ENCODE measurements at regions of chr12 and their contacts with region 1.

Region 1: GRCh38 chr12:21248679-21249078 is 86.0 kb downstream of the SLCO1A2 start:
- DNase-seq: no peak
- H3K4me3 ChIP-seq: no peak overlapping the region
- H3K27ac ChIP-seq: no peak overlapping the region
- H3K4me1 ChIP-seq: no peaks in the 10 kb centered on the region
- H3K27me3 ChIP-seq: no peaks in the 10 kb centered on the region
- CTCF ChIP-seq: peak; percentile 57; the same call in 1 of the 2 replicates

Region 2: GRCh38 chr12:20547816-20548575 is 700.7 kb before region 1 on chr12:
- CTCF ChIA-PET with region 1: interaction called, 11 read pairs
- POLR2A ChIA-PET with region 1: no interaction called
- intact Hi-C with region 1: no loop called
- DNase-seq: no peak
- H3K4me3 ChIP-seq: no peak overlapping the region
- H3K27ac ChIP-seq: no peak overlapping the region
- H3K4me1 ChIP-seq: no peaks in the 10 kb centered on the region
- H3K27me3 ChIP-seq: no peaks in the 10 kb centered on the region
- CTCF ChIP-seq: no peak

Region 3: DNA sequence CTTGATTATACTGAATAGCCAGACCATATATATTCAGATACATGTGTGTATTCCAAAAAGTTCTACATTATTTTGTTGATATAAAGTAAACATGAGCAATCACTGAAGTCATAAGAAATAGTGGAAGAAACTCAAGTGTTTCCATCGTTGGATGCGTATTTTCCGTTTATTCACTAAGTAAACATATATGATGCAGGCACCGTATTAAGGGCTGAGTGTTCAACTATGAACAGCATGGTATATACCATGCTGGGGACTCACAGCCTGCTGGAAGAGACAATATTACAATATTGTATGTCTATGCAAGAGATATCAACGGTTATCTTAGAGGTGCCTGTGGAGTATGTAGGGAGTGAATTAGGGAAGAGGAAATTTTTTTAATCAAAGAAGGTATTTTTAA is 190.0 kb after region 1 on chr12:
- CTCF ChIA-PET with region 1: no interaction called
- POLR2A ChIA-PET with region 1: no interaction called
- intact Hi-C with region 1: loop called (anchors 1 kb)
- DNase-seq: no peak
- H3K4me3 ChIP-seq: peak overlapping the region; percentile 99
- H3K27ac ChIP-seq: peak overlapping the region; percentile 97
- H3K4me1 ChIP-seq: peaks cover 23% of the 10 kb centered on the region
- H3K27me3 ChIP-seq: no peaks in the 10 kb centered on the region
- CTCF ChIP-seq: no peak

Region 4: GRCh38 chr12:21683115-21683514 is 434.4 kb after region 1 on chr12:
- CTCF ChIA-PET with region 1: no interaction called
- POLR2A ChIA-PET with region 1: no interaction called
- intact Hi-C with region 1: loop called (anchors 5 kb)
- DNase-seq: no peak
- H3K4me3 ChIP-seq: no peak overlapping the region
- H3K27ac ChIP-seq: no peak overlapping the region
- H3K4me1 ChIP-seq: no peaks in the 10 kb centered on the region
- H3K27me3 ChIP-seq: no peaks in the 10 kb centered on the region
- CTCF ChIP-seq: no peak

Measured in PC-9 (cell line).